Left ventricle myocardium superior (tissue), 1 donor: ENCODE measurements at regions of chr19 and their contacts with region 1.

Region 1: GRCh38 chr19:54029930-54030490 is 33.7 kb downstream of the VSTM1 start:
- DNase-seq: peak; percentile 38
- ATAC-seq: no peak

Region 2: DNA sequence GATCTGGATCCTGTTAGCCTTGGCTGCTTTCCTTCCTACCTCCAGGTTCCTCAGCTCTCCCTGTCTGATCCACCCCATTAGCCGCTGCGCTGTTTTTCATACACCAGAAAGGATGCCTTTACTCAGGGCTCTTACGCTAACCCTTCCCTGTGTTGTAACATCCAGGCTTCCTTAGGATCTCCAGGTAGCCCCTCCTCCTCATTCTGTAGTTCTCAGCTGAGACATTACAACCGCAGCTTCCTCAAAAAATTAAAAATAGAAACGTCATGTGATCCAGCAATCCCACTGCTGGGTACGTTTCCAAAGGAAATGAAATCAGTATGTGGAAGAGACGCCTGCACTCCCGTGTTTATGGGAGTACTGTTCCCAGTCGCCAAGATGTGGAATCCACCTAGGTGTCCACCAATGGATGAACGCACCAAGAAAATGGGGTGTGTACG is 180.8 kb before region 1 on chr19:
- intact Hi-C with region 1: loop called (anchors 10 kb)
- DNase-seq: no peak
- ATAC-seq: peak; percentile 60

Region 3: GRCh38 chr19:53912653-53913052 is 117.4 kb before region 1 on chr19:
- intact Hi-C with region 1: loop called (anchors 10 kb)
- DNase-seq: no peak
- ATAC-seq: no peak

Region 4: DNA sequence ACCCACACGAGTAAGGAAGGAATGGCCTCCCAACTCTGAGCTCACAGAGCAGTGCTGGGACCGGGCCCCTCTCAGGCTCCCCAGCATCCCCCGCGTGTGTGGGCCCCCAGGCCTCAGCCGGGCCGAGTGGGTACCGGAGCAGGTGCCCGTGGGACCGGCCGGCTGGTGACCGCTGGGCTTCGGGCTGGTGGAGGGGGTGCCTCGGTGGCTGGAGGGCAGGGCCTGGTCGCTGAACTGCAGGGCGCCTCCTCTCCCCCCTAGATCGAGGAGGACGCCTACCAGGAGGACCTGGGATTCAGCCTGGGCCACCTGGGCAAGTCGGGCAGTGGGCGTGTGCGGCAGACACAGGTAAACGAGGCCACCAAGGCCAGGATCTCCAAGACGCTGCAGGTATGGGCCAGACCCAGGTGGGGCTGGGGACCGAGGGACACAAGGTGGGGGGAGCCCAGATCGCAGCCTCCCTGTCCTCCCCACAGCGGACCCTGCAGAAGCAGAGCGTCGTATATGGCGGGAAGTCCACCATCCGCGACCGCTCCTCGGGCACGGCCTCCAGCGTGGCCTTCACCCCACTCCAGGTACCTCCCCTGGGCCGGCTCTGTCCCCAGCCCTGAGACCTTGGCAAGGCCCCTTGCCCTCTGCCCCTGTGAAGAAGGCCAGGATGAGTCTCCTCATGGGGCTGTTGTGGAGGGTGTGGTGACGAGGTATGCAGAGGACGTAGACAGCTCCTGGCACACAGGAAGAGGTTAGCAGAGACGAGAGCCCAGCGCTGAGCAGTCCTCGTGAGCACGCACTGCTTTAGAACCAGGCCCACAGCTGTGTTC is 99.0 kb after region 1 on chr19:
- intact Hi-C with region 1: no loop called
- DNase-seq: no peak
- ATAC-seq: no peak